Activated CD4-positive, alpha-beta T cell treated with anti-CD3 and anti-CD28 coated beads for 36 hours (primary cell): ENCODE measurements at regions of chr10 and their contacts with region 1.

Region 1: GRCh38 chr10:24724381-24725228 is 918 bp upstream of the ARHGAP21 start:
- DNase-seq: peak; percentile 97
- ATAC-seq: peak; percentile 92
- H3K4me3 Mint-ChIP-seq: peak overlapping the region; percentile 87
- H3K27ac Mint-ChIP-seq: peak overlapping the region; percentile 90
- H3K4me1 Mint-ChIP-seq: peaks cover 26% of the 10 kb centered on the region
- H3K27me3 Mint-ChIP-seq: no peaks in the 10 kb centered on the region

Region 2: DNA sequence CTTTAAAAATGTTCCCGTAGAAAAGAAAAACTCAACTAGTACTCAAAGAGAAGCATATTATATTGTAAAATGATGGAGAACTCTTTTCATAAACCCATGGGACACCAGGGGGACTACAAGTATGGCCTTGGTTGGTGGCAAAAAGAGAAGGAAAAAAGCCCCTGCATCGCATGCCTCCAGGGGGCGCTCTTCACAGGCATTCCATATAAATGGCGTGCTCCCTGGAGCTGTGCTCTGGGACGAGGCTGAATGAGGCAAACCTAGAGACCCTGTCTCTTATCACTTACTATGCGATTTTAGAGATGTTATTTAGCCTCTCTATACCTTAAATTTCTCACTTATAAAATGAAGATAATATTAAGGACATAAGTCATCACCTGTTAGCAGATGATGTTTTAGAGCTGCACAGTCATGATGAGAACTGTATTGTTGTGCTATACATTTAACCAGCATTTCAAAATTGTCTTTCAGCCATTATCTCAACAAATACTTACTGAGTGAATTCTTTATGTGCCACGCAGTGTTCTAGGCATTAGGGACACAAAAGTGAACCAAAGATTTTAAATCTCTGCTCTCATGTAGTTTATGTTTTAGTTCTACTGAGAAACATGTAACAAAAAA is 106.7 kb before region 1 on chr10:
- CTCF ChIA-PET with region 1: no interaction called
- POLR2A ChIA-PET with region 1: no interaction called
- intact Hi-C with region 1: loop called in 1 of 2 experiments (anchors 5 kb)
- DNase-seq: peak; percentile 72
- ATAC-seq: peak; percentile 45
- H3K4me3 Mint-ChIP-seq: peak overlapping the region; percentile 57
- H3K27ac Mint-ChIP-seq: peak overlapping the region; percentile 68
- H3K4me1 Mint-ChIP-seq: peaks cover 43% of the 10 kb centered on the region
- H3K27me3 Mint-ChIP-seq: no peaks in the 10 kb centered on the region

Region 3: DNA sequence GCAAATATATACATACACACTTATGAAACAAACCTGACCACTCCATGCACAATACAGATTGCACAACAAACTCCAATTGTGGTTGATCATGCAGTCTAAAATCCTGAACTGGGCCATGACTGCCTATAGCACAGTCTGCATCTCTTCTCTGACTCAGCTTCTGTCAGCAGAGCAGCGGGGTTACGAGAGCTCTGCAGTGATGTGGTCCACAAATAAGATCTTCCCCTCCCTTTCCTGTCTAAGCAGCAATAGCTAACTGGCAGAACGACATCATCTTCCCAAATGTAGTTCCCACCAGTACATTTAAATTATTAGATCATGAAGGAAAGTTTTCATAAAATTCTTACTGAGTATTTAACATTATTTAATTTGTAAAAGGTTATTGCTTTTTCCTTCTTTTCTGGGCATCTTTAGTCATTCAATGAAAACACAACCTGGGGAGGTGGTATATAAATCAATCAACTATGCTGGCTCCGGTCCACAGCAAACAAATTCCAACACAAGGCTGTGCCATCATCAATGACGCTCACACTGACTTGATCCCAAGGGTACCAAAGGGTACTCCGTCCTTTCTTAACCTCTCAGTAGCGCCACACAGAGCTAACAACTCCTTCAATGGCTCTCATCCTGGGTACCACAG is 18.0 kb before region 1 on chr10:
- CTCF ChIA-PET with region 1: interaction called, 6 read pairs
- POLR2A ChIA-PET with region 1: interaction called, 10 read pairs
- intact Hi-C with region 1: loop called (anchors 1 to 2 kb)
- DNase-seq: peak; percentile 62
- ATAC-seq: peak; percentile 88
- H3K4me3 Mint-ChIP-seq: no peak overlapping the region
- H3K27ac Mint-ChIP-seq: no peak overlapping the region
- H3K4me1 Mint-ChIP-seq: peaks cover 7% of the 10 kb centered on the region
- H3K27me3 Mint-ChIP-seq: no peaks in the 10 kb centered on the region

Region 4: GRCh38 chr10:24887855-24888231 is 163.2 kb after region 1 on chr10:
- CTCF ChIA-PET with region 1: no interaction called
- POLR2A ChIA-PET with region 1: no interaction called
- intact Hi-C with region 1: loop called in 1 of 2 experiments (anchors 5 kb)
- DNase-seq: no peak
- ATAC-seq: peak; percentile 17
- H3K4me3 Mint-ChIP-seq: no peak overlapping the region
- H3K27ac Mint-ChIP-seq: peak overlapping the region; percentile 60
- H3K4me1 Mint-ChIP-seq: peaks cover 24% of the 10 kb centered on the region
- H3K27me3 Mint-ChIP-seq: no peaks in the 10 kb centered on the region

Region 5: GRCh38 chr10:24952707-24953645 is 228.4 kb after region 1 on chr10:
- CTCF ChIA-PET with region 1: no interaction called
- POLR2A ChIA-PET with region 1: no interaction called
- intact Hi-C with region 1: loop called (anchors 2 to 5 kb)
- DNase-seq: peak; percentile 59
- ATAC-seq: peak; percentile 69
- H3K4me3 Mint-ChIP-seq: peak overlapping the region; percentile 67
- H3K27ac Mint-ChIP-seq: no peak overlapping the region
- H3K4me1 Mint-ChIP-seq: peaks cover 17% of the 10 kb centered on the region
- H3K27me3 Mint-ChIP-seq: peaks cover 4% of the 10 kb centered on the region

Region 6: GRCh38 chr10:25080880-25081581 is 356.4 kb after region 1 on chr10:
- CTCF ChIA-PET with region 1: interaction called, 5 read pairs
- POLR2A ChIA-PET with region 1: no interaction called
- intact Hi-C with region 1: loop called (anchors 5 to 10 kb)
- DNase-seq: peak; percentile 77
- ATAC-seq: peak; percentile 65
- H3K4me3 Mint-ChIP-seq: no peak overlapping the region
- H3K27ac Mint-ChIP-seq: no peak overlapping the region
- H3K4me1 Mint-ChIP-seq: peaks cover 6% of the 10 kb centered on the region
- H3K27me3 Mint-ChIP-seq: peaks cover 3% of the 10 kb centered on the region